IMR-90 (cell line): ENCODE measurements at regions of chrX and their contacts with region 1.

Region 1: GRCh38 chrX:37380920-37381319 is 31.8 kb downstream of the PRRG1 start:
- DNase-seq: peak; percentile 82
- ATAC-seq: peak; percentile 54
- H3K4me3 ChIP-seq: no peak overlapping the region
- H3K27ac ChIP-seq: no peak overlapping the region
- H3K4me1 ChIP-seq: no peaks in the 10 kb centered on the region
- H3K27me3 ChIP-seq: no peaks in the 10 kb centered on the region
- CTCF ChIP-seq: no peak
- POLR2A ChIP-seq: no peak
- RAD21 ChIP-seq: no peak

Region 2: GRCh38 chrX:37314536-37314935 is 66.4 kb before region 1 on chrX:
- CTCF ChIA-PET with region 1: no interaction called
- POLR2A ChIA-PET with region 1: no interaction called
- dilution Hi-C with region 1: no loop called
- in situ Hi-C with region 1: no loop called
- intact Hi-C with region 1: loop called (anchors 5 kb)
- DNase-seq: peak; percentile 64
- ATAC-seq: peak; percentile 84
- H3K4me3 ChIP-seq: no peak overlapping the region
- H3K27ac ChIP-seq: peak overlapping the region; percentile 43; the same call in 1 of the 2 replicates
- H3K4me1 ChIP-seq: peaks cover 6% of the 10 kb centered on the region
- H3K27me3 ChIP-seq: 0 out of 2 replicates have a peak, but pooled peaks cover 2% of the 10 kb centered on the region
- CTCF ChIP-seq: no peak
- POLR2A ChIP-seq: no peak
- RAD21 ChIP-seq: no peak